ENCODE measurements at regions of chr19 and their contacts with region 1.

Region 1: DNA sequence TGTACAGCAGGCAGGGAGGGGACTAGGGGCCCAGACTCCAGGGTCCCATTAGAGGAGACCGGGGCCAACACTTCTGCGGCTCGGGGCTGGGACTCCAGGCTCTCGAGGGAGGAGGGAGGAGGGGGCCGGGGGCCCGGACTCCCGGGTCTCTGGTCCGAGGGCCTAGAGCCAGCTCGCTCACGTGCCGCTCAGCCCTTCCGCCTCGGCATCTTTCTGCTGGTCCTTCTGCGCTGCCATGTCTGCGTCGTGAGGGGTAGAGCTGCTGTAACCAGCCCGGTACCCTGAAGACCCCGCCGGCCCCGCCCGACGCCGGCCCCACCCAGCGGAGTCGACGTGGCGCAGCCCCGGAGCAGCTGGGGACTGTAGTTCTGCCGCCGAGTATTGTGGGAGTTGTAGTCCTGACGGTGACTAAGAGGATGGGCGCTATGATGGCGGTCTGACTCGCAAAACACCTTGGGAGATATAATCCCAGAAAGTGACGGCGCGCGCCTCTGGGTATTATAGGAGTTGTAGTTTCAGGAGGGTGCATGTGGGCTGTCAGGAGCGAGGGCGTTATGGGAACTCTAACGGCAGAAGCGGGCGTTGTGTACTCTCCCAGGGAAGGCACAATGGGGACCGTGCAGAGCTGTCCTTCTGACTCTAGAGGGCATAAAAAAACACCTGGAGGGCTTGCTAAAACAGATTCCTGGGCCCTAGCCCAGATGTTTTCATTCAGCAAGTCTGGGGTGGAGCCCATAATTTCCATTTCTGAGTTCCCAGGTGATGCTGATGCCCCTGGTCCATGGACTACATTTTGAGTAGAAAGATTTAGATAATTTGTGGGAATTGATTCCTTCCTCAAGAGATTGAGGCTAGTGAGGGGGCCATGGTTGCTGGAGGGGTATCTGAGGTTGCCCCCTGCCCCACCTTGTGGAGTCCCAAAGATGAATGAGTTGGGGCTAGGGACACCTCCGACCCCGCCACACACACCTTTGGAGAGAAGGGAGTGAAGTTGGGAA is at the start of gene RABAC1:
- DNase-seq: peak; percentile 75
- H3K4me3 ChIP-seq: peak within 1 kb of the TSS; percentile 89
- H3K27ac ChIP-seq: peak within 1 kb of the TSS; percentile 95
- H3K27me3 ChIP-seq: no peaks in the 10 kb centered on the region
- CTCF ChIP-seq: peak; percentile 29
- polyA plus RNA-seq, gene RABAC1: 149 and 215 TPM in 2 replicates

Region 2: GRCh38 chr19:41859618-41860418 is 99.5 kb before region 1 on chr19 and contains the start of gene RPS19:
- CTCF ChIA-PET with region 1: interaction called, 6 read pairs
- POLR2A ChIA-PET with region 1: interaction called, 28 read pairs
- DNase-seq: peak; percentile 96
- H3K4me3 ChIP-seq: peak within 1 kb of the TSS; percentile 99
- H3K27ac ChIP-seq: peak within 1 kb of the TSS; percentile 95
- H3K27me3 ChIP-seq: peaks cover 7% of the 10 kb centered on the region
- CTCF ChIP-seq: peak; percentile 64
- polyA plus RNA-seq, gene RPS19: 1,320 and 1,738 TPM in 2 replicates

Measured in AG04450 (cell line).